Activated naive CD4-positive, alpha-beta T cell treated with anti-CD3 and anti-CD28 coated beads for 36 hours (primary cell): ENCODE measurements at regions of chr12 and their contacts with region 1.

Region 1: DNA sequence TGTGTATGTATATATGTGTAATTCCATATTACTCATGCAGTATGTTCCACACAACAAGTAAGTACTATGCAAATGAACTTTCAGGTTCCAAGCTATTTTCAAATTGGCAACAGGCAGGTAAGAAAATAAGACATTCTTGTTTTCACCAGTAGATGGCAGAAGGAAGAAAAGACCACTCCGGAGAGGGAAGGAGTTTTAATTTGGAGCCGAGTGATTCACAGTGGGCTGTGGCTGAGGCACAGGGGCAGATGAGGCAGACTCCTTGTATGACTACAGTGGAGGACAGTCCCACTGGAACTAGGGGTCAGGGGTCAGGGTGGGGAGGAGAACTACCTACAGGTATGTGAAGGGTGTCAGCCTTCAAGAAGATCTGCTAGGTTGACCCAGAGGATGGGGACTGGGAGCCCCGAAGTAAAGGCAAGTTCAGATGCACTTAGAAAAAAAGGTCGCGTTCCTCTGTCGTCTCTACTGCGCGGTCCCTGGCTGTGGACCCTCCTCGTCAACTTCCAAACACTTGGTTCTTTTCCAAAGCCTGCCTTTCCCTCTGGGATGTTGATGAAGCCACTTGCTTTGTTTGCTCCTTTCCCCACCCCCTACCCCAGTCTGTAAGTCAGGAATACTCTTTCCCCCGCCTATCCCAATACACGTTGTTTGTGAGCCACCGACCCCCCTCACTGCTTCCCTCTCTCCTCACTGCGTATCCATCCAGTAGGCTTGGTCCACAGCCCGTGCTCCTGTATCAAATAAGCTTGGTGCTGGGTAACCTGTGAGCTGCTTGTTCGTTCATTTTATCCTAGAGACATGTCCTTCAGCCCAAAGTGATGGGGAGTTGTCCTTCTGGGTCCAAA is 24.1 kb downstream of the DDX47 start:
- DNase-seq: peak; percentile 78
- H3K4me3 Mint-ChIP-seq: no peak overlapping the region
- H3K27ac Mint-ChIP-seq: peak overlapping the region; percentile 54
- H3K4me1 Mint-ChIP-seq: peaks cover 52% of the 10 kb centered on the region
- H3K27me3 Mint-ChIP-seq: no peaks in the 10 kb centered on the region

Region 2: GRCh38 chr12:12786716-12787601 is 50.3 kb before region 1 on chr12:
- CTCF ChIA-PET with region 1: interaction called, 9 read pairs
- intact Hi-C with region 1: loop called (anchors 2 kb)
- DNase-seq: peak; percentile 67
- H3K4me3 Mint-ChIP-seq: peak overlapping the region; percentile 83
- H3K27ac Mint-ChIP-seq: peak overlapping the region; percentile 84
- H3K4me1 Mint-ChIP-seq: peaks cover 27% of the 10 kb centered on the region
- H3K27me3 Mint-ChIP-seq: no peaks in the 10 kb centered on the region

Region 3: DNA sequence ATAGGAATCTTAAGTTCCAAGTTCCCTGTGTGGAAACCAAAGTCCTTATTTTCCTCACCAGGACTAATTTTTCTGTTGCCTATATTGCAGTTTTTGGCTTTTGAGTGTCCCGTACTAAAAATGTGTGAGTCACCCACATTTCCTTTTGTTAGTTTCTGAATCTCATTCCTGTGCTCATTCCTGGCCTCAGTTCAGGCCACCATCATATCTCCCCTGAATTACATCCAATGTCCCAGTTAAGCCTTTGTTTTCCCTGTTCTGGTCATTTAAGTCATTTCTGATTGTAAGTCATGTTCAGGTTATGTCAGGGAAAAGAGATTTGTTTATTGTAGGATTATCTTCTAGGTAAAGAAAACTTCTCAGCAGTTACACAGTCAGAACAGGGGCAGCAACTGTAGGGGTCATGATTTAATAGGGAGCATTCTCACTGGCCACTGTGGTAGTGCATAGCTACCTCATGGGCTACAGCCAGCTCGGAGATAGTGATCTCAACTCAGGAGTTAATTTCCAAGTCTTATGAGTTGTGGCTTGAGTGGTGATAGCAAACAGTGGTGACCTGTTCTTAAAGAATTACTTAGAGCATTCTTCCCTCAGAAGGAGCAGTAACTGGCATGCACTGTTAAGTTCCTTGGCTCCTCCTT is 17.5 kb before region 1 on chr12:
- CTCF ChIA-PET with region 1: interaction called, 18 read pairs
- intact Hi-C with region 1: no loop called
- DNase-seq: no peak
- H3K4me3 Mint-ChIP-seq: no peak overlapping the region
- H3K27ac Mint-ChIP-seq: peak overlapping the region; percentile 26
- H3K4me1 Mint-ChIP-seq: peaks cover 55% of the 10 kb centered on the region
- H3K27me3 Mint-ChIP-seq: no peaks in the 10 kb centered on the region

Region 4: DNA sequence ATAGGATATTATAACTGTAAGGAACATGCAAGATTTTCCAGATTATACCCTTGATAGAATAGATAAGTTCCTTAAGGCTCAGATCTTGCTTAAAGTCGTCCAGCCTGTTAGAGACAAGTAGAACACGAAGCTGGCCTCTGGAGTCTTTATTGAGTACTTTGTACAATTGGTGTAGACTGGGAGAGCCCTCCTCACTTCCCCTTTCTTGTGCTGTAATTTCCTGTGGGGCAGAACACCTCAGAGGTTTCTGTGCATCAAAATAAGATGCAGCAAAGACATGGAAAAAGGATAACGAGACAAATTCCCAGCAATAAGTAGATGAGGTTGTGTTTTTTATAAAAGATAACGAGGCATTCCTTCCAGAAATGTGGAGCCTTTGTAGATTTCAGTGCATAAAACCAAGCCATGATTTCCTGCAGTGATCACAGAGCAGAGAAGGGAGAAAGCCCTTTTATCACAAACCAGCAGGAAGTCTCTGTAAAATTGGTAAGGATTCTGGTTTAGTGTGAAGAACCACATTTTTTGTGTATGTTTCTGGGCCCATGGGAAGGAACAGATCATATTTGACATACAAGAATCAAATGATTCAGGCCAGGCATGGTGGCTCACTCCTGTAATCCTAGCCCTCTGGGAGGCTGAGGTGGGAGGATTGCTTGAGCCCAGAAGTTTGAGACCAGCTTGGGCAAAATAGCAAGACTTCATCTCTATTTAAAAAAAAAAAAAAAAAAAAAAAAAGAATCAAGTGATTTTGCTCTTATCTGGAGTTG is 72.2 kb after region 1 on chr12:
- CTCF ChIA-PET with region 1: interaction called, 13 read pairs
- intact Hi-C with region 1: no loop called
- DNase-seq: no peak
- H3K4me3 Mint-ChIP-seq: no peak overlapping the region
- H3K27ac Mint-ChIP-seq: no peak overlapping the region
- H3K4me1 Mint-ChIP-seq: peaks cover 22% of the 10 kb centered on the region
- H3K27me3 Mint-ChIP-seq: no peaks in the 10 kb centered on the region

Region 5: DNA sequence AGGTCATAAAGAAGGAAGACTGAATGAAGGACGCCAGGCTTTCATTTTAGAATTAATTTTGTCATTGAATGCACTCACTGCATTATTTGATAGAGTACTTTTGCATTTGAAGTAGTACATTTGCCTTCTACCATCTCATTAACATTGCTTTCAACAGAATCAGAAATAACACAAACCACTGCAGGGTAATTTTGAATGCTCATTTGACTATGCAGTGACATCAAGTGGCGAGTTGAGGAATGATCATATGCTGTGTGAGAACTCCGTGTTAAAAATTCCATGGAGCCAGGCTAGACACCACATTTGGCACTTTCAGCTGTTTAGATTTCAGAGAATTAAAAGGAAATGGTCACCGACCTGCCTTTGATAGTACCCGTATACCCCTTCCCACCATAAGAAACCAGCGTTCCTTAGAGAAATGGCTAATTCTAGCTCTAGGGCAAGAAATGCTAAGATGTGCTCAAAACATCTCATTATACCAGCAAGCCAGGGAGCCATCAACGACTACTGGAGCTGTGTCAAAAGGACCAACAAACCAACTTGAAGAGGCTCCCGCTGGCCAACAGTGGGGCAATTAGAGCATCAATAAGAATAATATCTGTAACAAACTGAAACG is 146.3 kb after region 1 on chr12:
- CTCF ChIA-PET with region 1: interaction called, 4 read pairs
- intact Hi-C with region 1: loop called (anchors 1 kb)
- DNase-seq: peak; percentile 38
- H3K4me3 Mint-ChIP-seq: no peak overlapping the region
- H3K27ac Mint-ChIP-seq: no peak overlapping the region
- H3K4me1 Mint-ChIP-seq: no peaks in the 10 kb centered on the region
- H3K27me3 Mint-ChIP-seq: no peaks in the 10 kb centered on the region

Region 6: GRCh38 chr12:13094347-13094746 is 257.1 kb after region 1 on chr12:
- CTCF ChIA-PET with region 1: no interaction called
- intact Hi-C with region 1: loop called (anchors 1 kb)
- DNase-seq: no peak
- H3K4me3 Mint-ChIP-seq: no peak overlapping the region
- H3K27ac Mint-ChIP-seq: no peak overlapping the region
- H3K4me1 Mint-ChIP-seq: peaks cover 16% of the 10 kb centered on the region
- H3K27me3 Mint-ChIP-seq: no peaks in the 10 kb centered on the region